Panc1 (cell line): ENCODE measurements at regions of chr17 and their contacts with region 1.

Region 1: GRCh38 chr17:76427501-76428231 is 25.3 kb downstream of the UBE2O start:
- DNase-seq: no peak
- ATAC-seq: no peak
- H3K4me3 ChIP-seq: no peak overlapping the region
- H3K27ac ChIP-seq: no peak overlapping the region
- H3K4me1 ChIP-seq: no peaks in the 10 kb centered on the region
- H3K27me3 ChIP-seq: no peaks in the 10 kb centered on the region
- CTCF ChIP-seq: no peak

Region 2: DNA sequence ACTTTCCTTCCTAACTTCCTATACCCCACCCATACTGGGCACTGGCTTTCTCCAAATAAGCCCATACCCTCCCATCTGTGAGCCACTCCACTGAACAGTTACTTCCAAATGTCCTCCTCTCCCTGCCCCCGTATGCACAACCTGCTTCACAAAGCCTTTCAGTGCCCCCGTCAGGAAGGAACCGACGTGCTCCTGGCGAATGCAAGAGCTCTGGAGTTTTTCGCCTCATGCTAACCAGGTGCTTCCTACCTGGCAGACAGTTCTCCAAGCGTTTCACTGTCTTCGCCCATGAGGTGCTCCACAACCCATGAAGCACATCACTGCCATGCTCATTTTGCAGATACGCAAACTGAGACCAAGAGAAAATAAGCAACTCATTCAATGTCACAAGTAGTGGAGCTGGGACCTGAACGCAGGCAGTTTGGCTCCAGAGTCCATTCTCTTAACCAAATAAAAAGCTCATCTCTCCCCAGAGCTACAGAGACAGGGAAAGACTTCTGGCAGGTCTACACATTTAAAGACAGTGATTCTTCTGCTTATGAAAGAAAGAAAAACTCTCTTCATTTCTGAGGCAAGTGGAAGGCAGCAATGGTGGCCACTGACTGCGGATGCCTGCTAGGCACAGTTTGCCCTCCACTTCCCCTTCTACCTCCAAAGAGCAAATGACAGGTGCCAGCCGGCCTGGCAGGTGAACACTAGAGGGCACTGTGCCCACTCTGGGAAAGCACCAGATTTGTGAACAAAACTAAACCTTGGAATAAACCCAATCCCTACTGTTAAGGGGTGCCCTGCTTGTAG is 19.4 kb before region 1 on chr17:
- CTCF ChIA-PET with region 1: interaction called, 11 read pairs
- POLR2A ChIA-PET with region 1: no interaction called
- in situ Hi-C with region 1: no loop called
- intact Hi-C with region 1: no loop called
- DNase-seq: no peak
- ATAC-seq: peak; percentile 83
- H3K4me3 ChIP-seq: no peak overlapping the region
- H3K27ac ChIP-seq: no peak overlapping the region
- H3K4me1 ChIP-seq: no peaks in the 10 kb centered on the region
- H3K27me3 ChIP-seq: no peaks in the 10 kb centered on the region
- CTCF ChIP-seq: peak; percentile 97

Region 3: GRCh38 chr17:76414334-76415295 is 13.1 kb before region 1 on chr17:
- CTCF ChIA-PET with region 1: interaction called, 11 read pairs
- POLR2A ChIA-PET with region 1: interaction called, 12 read pairs
- in situ Hi-C with region 1: no loop called
- intact Hi-C with region 1: no loop called
- DNase-seq: no peak
- ATAC-seq: no peak
- H3K4me3 ChIP-seq: no peak overlapping the region
- H3K27ac ChIP-seq: no peak overlapping the region
- H3K4me1 ChIP-seq: no peaks in the 10 kb centered on the region
- H3K27me3 ChIP-seq: no peaks in the 10 kb centered on the region
- CTCF ChIP-seq: no peak

Region 4: GRCh38 chr17:76452660-76453430 is 25.2 kb after region 1 on chr17 and contains the start of gene UBE2O:
- CTCF ChIA-PET with region 1: interaction called, 11 read pairs
- POLR2A ChIA-PET with region 1: no interaction called
- in situ Hi-C with region 1: no loop called
- intact Hi-C with region 1: no loop called
- DNase-seq: no peak
- ATAC-seq: peak; percentile 97
- H3K4me3 ChIP-seq: peak within 1 kb of the TSS; percentile 80 to 88
- H3K27ac ChIP-seq: peak within 1 kb of the TSS; percentile 72
- H3K4me1 ChIP-seq: peaks cover 24% of the 10 kb centered on the region
- H3K27me3 ChIP-seq: no peaks in the 10 kb centered on the region
- CTCF ChIP-seq: peak; percentile 87
- total RNA-seq, gene UBE2O: 47.5 TPM

Region 5: GRCh38 chr17:76479515-76480060 is 51.9 kb after region 1 on chr17:
- CTCF ChIA-PET with region 1: interaction called, 10 read pairs
- POLR2A ChIA-PET with region 1: no interaction called
- in situ Hi-C with region 1: no loop called
- intact Hi-C with region 1: no loop called
- DNase-seq: no peak
- ATAC-seq: no peak
- H3K4me3 ChIP-seq: no peak overlapping the region
- H3K27ac ChIP-seq: no peak overlapping the region
- H3K4me1 ChIP-seq: no peaks in the 10 kb centered on the region
- H3K27me3 ChIP-seq: no peaks in the 10 kb centered on the region
- CTCF ChIP-seq: no peak

Region 6: DNA sequence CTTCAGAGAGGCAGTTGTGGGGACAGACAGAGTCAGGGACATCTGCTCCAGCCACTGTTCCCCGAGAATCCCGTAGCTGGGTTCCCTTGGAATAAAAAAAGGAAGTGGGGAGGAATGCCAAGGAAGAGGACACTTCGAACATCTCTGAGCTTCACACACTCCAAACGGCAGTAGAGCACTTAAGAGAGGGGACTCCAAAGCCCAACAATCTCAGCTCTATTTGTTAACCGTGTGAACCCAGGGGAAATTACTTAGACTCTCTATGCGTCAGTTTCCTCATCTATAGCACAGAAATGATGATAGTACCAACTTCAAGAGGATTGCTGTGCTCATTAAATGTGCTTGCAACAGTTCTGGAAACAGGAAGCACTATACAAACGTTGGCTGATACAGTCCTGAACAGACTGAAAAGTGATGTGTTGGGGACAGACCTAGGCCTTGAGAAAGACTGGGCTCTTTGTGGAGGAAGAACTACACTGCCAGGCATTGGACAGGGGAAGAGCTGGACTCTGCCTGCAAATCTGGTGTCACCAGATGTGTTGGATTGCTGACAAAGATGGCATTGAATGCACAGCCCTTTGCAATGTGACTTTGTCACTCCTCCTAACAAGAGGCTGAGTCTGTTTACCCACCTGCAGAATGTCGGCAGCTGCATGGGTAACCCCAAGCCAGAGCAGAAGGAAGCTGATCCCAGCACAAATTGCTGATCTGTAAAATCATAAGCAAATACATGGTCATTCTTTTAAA is 170.2 kb after region 1 on chr17:
- CTCF ChIA-PET with region 1: no interaction called
- POLR2A ChIA-PET with region 1: interaction called, 22 read pairs
- in situ Hi-C with region 1: no loop called
- intact Hi-C with region 1: no loop called
- DNase-seq: no peak
- ATAC-seq: 0 out of 2 replicates have a peak, but pooled peaks have one; percentile 14
- H3K4me3 ChIP-seq: no peak overlapping the region
- H3K27ac ChIP-seq: no peak overlapping the region
- H3K4me1 ChIP-seq: 0 out of 2 replicates have a peak, but pooled peaks cover 2% of the 10 kb centered on the region
- H3K27me3 ChIP-seq: no peaks in the 10 kb centered on the region
- CTCF ChIP-seq: no peak